ENCODE measurements at regions of chr9 and their contacts with region 1.

Region 1: GRCh38 chr9:97559111-97559514 is 57.6 kb downstream of the TMOD1 start:
- DNase-seq: peak in 5 of 10 donors; percentile 33 to 91 (median 61)

Region 2: GRCh38 chr9:97598461-97599288 is 39.6 kb after region 1 on chr9:
- intact Hi-C with region 1: loop called (anchors 5 kb)
- DNase-seq: peak in 8 of 10 donors; percentile 53 to 94 (median 74)